Endothelial cell of umbilical vein (primary cell): ENCODE measurements at regions of chr22 and their contacts with region 1.

Region 1: DNA sequence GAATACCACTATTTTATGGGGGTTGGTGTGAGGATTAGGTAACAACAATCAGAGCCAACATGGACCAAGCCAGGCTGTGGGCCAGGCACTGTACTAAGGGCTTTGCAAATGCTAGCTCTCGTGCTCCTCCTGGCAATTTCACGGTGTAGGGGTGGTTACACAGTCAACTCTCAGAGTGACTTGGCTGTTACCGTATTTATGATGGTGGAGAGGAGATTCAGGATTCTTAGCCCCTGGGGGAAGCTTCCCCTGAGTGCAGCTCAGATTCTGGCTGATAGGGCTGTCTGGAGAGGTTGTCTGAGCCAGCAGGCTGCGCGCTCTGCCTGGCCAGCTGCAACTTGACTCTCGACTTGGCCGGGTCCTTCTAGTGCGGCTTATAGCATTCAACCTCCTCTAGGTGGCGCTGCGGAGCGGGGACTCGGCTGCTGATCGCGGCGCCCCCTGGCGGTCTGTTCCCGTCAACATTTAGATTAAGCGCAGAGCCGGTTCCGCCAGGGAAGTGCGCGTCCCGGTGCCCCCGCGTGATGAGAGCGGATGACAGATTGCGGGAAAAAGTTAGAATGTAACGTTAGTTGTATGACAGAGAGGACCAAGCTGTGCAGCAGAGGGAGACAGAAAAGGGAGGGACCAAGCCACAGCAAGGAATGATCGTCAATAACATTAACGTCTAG is 4.5 kb upstream of the NCF4 start:
- DNase-seq: peak; percentile 87
- H3K4me3 ChIP-seq: no peak overlapping the region
- H3K27ac ChIP-seq: no peak overlapping the region
- H3K4me1 ChIP-seq: peaks cover 7% of the 10 kb centered on the region
- H3K27me3 ChIP-seq: peaks cover 7 to 9% of the 10 kb centered on the region in 2 experiments
- CTCF ChIP-seq: peak; percentile 100
- POLR2A ChIP-seq: no peak

Region 2: DNA sequence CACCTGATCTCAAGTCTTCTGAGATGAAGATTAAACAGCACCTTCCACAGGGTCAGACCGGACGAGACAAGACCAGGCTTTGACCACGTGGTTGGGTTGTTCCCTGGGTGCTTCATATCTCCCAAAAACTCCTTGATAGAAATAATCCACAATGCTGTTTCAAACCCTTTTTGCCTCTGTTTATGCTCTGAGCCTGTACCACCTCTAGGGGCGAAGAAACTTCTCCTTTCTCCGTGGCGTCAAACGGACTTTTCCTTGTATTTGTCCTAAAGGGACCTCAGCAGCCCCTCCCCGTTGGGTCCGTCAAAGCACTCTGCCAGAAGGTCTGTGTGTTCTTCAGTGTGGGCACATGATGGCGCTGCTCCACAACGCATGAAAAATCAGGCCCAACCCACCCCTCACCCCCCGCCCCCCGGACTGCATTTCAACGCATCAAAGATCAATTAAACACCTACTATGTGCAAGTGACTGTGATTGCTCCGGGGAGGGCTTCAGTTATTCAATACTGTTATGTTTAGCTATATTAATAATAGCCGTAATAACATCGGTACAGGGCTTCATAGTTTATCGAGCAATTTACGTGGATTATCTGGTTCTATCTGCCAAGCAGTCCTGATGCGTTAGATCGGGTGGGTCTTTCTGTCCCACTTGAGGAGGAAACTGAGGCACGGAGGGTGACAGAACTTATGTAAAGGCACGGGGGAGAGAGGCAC is 310.0 kb before region 1 on chr22:
- CTCF ChIA-PET with region 1: interaction called, 116 read pairs
- POLR2A ChIA-PET with region 1: no interaction called
- dilution Hi-C with region 1: no loop called
- intact Hi-C with region 1: loop called (anchors 1 kb)
- DNase-seq: peak; percentile 54
- H3K4me3 ChIP-seq: no peak overlapping the region
- H3K27ac ChIP-seq: no peak overlapping the region
- H3K4me1 ChIP-seq: peaks cover 23% of the 10 kb centered on the region
- H3K27me3 ChIP-seq: peaks cover 2 to 4% of the 10 kb centered on the region in 2 experiments
- CTCF ChIP-seq: peak; percentile 45 to 68
- POLR2A ChIP-seq: no peak

Region 3: DNA sequence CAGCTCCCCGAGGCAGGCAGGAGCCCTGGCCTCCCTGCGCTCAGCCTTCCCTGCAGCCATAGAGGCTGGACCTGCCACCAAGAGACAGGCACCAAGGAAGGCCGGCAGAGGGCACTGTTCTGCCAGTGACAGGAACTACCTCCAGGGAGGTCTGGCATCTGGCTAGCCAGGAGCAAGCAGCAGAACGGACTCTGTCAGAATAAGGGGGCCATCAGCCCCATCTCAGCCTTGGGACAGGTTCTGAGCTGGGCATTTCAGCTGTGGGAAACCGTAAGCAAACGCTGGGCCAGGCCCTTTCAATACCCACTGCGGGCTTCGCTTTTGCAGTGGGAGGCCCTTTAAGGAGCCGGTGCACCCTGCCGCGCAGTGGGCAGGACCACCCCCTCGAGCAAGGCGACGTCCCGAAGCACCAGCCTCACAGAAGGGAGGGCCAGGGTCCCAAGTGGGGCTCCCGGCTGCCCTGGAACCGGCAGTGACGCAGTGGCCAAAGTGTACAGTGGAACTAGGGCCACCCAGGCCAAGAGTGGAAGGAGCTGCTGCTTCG is 98.5 kb before region 1 on chr22:
- CTCF ChIA-PET with region 1: interaction called, 14 read pairs
- POLR2A ChIA-PET with region 1: no interaction called
- dilution Hi-C with region 1: no loop called
- intact Hi-C with region 1: no loop called
- DNase-seq: peak; percentile 53
- H3K4me3 ChIP-seq: no peak overlapping the region
- H3K27ac ChIP-seq: no peak overlapping the region
- H3K4me1 ChIP-seq: no peaks in the 10 kb centered on the region
- H3K27me3 ChIP-seq: peaks cover 0 to 4% of the 10 kb centered on the region in 2 experiments
- CTCF ChIP-seq: peak; percentile 82 to 94
- POLR2A ChIP-seq: no peak

Region 4: GRCh38 chr22:36781656-36782627 is 74.3 kb before region 1 on chr22:
- CTCF ChIA-PET with region 1: interaction called, 149 read pairs
- POLR2A ChIA-PET with region 1: no interaction called
- dilution Hi-C with region 1: no loop called
- intact Hi-C with region 1: loop called (anchors 1 kb)
- DNase-seq: peak; percentile 95
- H3K4me3 ChIP-seq: no peak overlapping the region
- H3K27ac ChIP-seq: peak overlapping the region; percentile 62
- H3K4me1 ChIP-seq: peaks cover 4% of the 10 kb centered on the region
- H3K27me3 ChIP-seq: peaks cover 3 to 8% of the 10 kb centered on the region in 2 experiments
- CTCF ChIP-seq: peak; percentile 93 to 98
- POLR2A ChIP-seq: no peak

Region 5: GRCh38 chr22:36818010-36818642 is 38.1 kb before region 1 on chr22:
- CTCF ChIA-PET with region 1: interaction called, 22 read pairs
- POLR2A ChIA-PET with region 1: no interaction called
- dilution Hi-C with region 1: no loop called
- intact Hi-C with region 1: loop called (anchors 1 kb)
- DNase-seq: no peak
- H3K4me3 ChIP-seq: no peak overlapping the region
- H3K27ac ChIP-seq: no peak overlapping the region
- H3K4me1 ChIP-seq: peaks cover 4% of the 10 kb centered on the region
- H3K27me3 ChIP-seq: peaks cover 46 to 50% of the 10 kb centered on the region in 2 experiments
- CTCF ChIP-seq: no peak
- POLR2A ChIP-seq: no peak

Region 6: GRCh38 chr22:36839356-36840073 is 16.7 kb before region 1 on chr22:
- CTCF ChIA-PET with region 1: interaction called, 24 read pairs
- POLR2A ChIA-PET with region 1: no interaction called
- dilution Hi-C with region 1: no loop called
- intact Hi-C with region 1: no loop called
- DNase-seq: no peak
- H3K4me3 ChIP-seq: no peak overlapping the region
- H3K27ac ChIP-seq: no peak overlapping the region
- H3K4me1 ChIP-seq: no peaks in the 10 kb centered on the region
- H3K27me3 ChIP-seq: peaks cover 5% of the 10 kb centered on the region in 2 experiments
- CTCF ChIP-seq: no peak
- POLR2A ChIP-seq: no peak

Region 7: GRCh38 chr22:36921309-36922104 is 65.3 kb after region 1 on chr22:
- CTCF ChIA-PET with region 1: no interaction called
- POLR2A ChIA-PET with region 1: no interaction called
- dilution Hi-C with region 1: no loop called
- intact Hi-C with region 1: no loop called
- DNase-seq: peak; percentile 5
- H3K4me3 ChIP-seq: no peak overlapping the region
- H3K27ac ChIP-seq: no peak overlapping the region
- H3K4me1 ChIP-seq: no peaks in the 10 kb centered on the region
- H3K27me3 ChIP-seq: no peaks in the 10 kb centered on the region
- CTCF ChIP-seq: no peak
- POLR2A ChIP-seq: no peak

Region 8: GRCh38 chr22:36977947-36978660 is 121.8 kb after region 1 on chr22:
- CTCF ChIA-PET with region 1: interaction called, 120 read pairs
- POLR2A ChIA-PET with region 1: no interaction called
- dilution Hi-C with region 1: no loop called
- intact Hi-C with region 1: loop called (anchors 1 kb)
- DNase-seq: peak; percentile 75
- H3K4me3 ChIP-seq: peak overlapping the region; percentile 3 to 58 (median 32)
- H3K27ac ChIP-seq: no peak overlapping the region
- H3K4me1 ChIP-seq: no peaks in the 10 kb centered on the region
- H3K27me3 ChIP-seq: peaks cover under 1 to 5% of the 10 kb centered on the region in 2 experiments
- CTCF ChIP-seq: peak; percentile 84 to 89
- POLR2A ChIP-seq: no peak

Region 9: GRCh38 chr22:37001826-37002225 is 145.6 kb after region 1 on chr22:
- CTCF ChIA-PET with region 1: no interaction called
- POLR2A ChIA-PET with region 1: no interaction called
- dilution Hi-C with region 1: no loop called
- intact Hi-C with region 1: no loop called
- DNase-seq: no peak
- H3K4me3 ChIP-seq: no peak overlapping the region
- H3K27ac ChIP-seq: no peak overlapping the region
- H3K4me1 ChIP-seq: no peaks in the 10 kb centered on the region
- H3K27me3 ChIP-seq: peaks cover 14 to 22% of the 10 kb centered on the region in 2 experiments
- CTCF ChIP-seq: no peak
- POLR2A ChIP-seq: no peak

Region 10: DNA sequence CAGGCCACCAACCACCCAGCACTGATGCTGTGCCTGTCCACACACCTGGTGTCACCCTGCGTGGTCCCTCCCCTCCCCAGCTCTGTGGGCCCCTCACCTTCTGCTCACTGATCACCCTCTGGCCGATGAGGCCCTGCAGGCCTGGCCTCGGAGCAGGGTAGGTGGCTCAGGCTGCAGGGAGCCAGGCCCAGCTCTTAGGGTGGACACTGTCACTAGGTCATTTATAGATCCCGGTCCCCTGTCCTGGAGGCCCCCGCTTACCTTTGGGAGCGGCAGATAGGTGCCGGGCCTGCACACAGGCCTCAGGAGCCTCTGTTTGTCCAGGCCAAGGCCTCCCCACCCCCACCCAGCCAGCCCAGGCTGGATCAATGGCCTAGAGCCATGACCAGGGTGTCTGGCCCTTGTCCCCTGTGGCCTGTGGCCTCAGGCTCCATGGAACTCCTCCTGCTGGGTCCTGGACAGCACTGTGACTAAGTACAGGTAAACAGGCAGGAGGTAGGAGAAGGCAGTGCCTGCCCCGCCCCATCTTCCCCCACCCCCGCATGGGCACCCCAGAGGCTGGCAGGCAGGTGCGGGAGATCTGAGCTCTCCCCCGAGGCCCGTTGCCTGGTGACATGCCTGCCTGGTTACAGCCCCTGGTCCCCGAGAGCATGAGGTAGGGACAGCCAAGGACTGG is 253.1 kb after region 1 on chr22 and contains the start of gene TMPRSS6:
- CTCF ChIA-PET with region 1: no interaction called
- POLR2A ChIA-PET with region 1: no interaction called
- dilution Hi-C with region 1: no loop called
- intact Hi-C with region 1: no loop called
- DNase-seq: no peak
- H3K4me3 ChIP-seq: no peak within 1 kb of the TSS
- H3K27ac ChIP-seq: no peak within 1 kb of the TSS
- H3K4me1 ChIP-seq: no peaks in the 10 kb centered on the region
- H3K27me3 ChIP-seq: peaks cover 0 to 1% of the 10 kb centered on the region in 2 experiments
- CTCF ChIP-seq: no peak
- POLR2A ChIP-seq: no peak
- total RNA-seq, gene TMPRSS6: not detected in 2 replicates